Mammary epithelial cell (primary cell): ENCODE measurements at regions of chr3 and their contacts with region 1.

Region 1: GRCh38 chr3:16060358-16060852 is 114.1 kb upstream of the GALNT15 start:
- DNase-seq: peak; percentile 97
- H3K4me3 ChIP-seq: no peak overlapping the region
- H3K27ac ChIP-seq: peak overlapping the region; percentile 77
- H3K4me1 ChIP-seq: peaks cover 34% of the 10 kb centered on the region
- H3K27me3 ChIP-seq: no peaks in the 10 kb centered on the region
- CTCF ChIP-seq: peak; percentile 10 to 39

Region 2: DNA sequence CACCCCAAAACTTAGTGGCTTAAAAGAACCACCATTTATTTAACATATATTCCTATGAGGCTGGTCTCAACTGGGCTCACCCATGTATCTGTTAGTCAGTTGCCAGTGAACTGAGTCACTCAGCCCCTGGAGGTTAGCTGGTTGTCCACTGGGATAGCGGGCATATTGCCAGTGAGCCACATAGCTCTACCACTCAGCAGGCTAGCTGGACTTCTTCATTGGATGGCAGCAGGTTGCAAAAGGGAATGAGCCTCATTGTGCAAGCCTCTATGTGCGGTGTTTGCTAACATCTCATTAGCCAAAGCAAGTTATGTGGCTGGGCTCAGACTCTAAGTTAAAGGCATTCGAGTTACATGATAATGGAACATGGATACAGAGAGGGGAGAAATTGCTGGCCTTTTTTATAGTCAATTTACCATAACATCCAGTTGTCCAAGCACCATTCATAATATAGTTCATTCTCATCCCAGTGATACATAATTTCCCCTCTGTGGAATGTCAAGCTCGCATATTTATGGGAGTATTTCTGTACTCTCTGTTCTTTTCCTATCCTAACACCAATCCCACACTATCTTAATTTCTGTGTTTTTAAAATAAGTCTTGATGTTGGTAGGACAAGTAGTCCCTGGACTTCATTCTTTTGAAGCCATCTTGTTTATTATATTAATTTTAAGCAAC is 450.2 kb before region 1 on chr3:
- CTCF ChIA-PET with region 1: no interaction called
- dilution Hi-C with region 1: no loop called
- in situ Hi-C with region 1: no loop called
- intact Hi-C with region 1: no loop called
- DNase-seq: peak; percentile 83
- H3K4me3 ChIP-seq: no peak overlapping the region
- H3K27ac ChIP-seq: no peak overlapping the region
- H3K4me1 ChIP-seq: no peaks in the 10 kb centered on the region
- H3K27me3 ChIP-seq: no peaks in the 10 kb centered on the region
- CTCF ChIP-seq: no peak

Region 3: GRCh38 chr3:16026753-16027152 is 33.7 kb before region 1 on chr3:
- CTCF ChIA-PET with region 1: no interaction called
- dilution Hi-C with region 1: no loop called
- in situ Hi-C with region 1: no loop called
- intact Hi-C with region 1: no loop called
- DNase-seq: no peak
- H3K4me3 ChIP-seq: no peak overlapping the region
- H3K27ac ChIP-seq: no peak overlapping the region
- H3K4me1 ChIP-seq: no peaks in the 10 kb centered on the region
- H3K27me3 ChIP-seq: no peaks in the 10 kb centered on the region
- CTCF ChIP-seq: no peak

Region 4: GRCh38 chr3:16102905-16103364 is 42.5 kb after region 1 on chr3:
- CTCF ChIA-PET with region 1: no interaction called
- dilution Hi-C with region 1: no loop called
- in situ Hi-C with region 1: loop called in 1 of 2 experiments (anchors 5 kb)
- intact Hi-C with region 1: loop called (anchors 1 kb)
- DNase-seq: peak; percentile 63
- H3K4me3 ChIP-seq: no peak overlapping the region
- H3K27ac ChIP-seq: no peak overlapping the region
- H3K4me1 ChIP-seq: peaks cover 22% of the 10 kb centered on the region
- H3K27me3 ChIP-seq: no peaks in the 10 kb centered on the region
- CTCF ChIP-seq: no peak

Region 5: DNA sequence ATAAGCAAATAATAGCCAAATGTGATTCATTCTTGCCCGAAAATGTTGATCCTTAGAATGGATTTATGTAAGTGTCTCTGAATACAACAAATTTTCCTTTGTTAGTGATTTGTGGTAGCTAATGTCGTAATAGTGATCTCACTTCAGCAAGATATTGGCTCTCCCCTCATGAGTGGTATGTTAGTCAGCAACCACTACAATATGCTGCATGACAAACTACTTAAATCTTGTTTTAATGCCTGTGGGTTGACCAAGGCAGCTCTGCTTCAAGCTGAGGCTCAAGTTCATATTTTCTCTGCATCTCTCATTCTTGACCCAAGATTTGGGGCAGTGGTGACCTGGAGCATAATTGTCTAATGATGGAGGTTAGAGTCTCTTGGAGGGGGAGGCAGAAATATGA is 64.2 kb after region 1 on chr3:
- CTCF ChIA-PET with region 1: interaction called, 5 read pairs
- dilution Hi-C with region 1: no loop called
- in situ Hi-C with region 1: no loop called
- intact Hi-C with region 1: loop called (anchors 1 kb)
- DNase-seq: peak; percentile 94
- H3K4me3 ChIP-seq: no peak overlapping the region
- H3K27ac ChIP-seq: peak overlapping the region; percentile 18
- H3K4me1 ChIP-seq: peaks cover 26% of the 10 kb centered on the region
- H3K27me3 ChIP-seq: no peaks in the 10 kb centered on the region
- CTCF ChIP-seq: no peak

Region 6: GRCh38 chr3:16140894-16141285 is 80.5 kb after region 1 on chr3:
- CTCF ChIA-PET with region 1: interaction called, 3 read pairs
- dilution Hi-C with region 1: no loop called
- in situ Hi-C with region 1: no loop called
- intact Hi-C with region 1: loop called (anchors 1 kb)
- DNase-seq: no peak
- H3K4me3 ChIP-seq: no peak overlapping the region
- H3K27ac ChIP-seq: no peak overlapping the region
- H3K4me1 ChIP-seq: peaks cover 11% of the 10 kb centered on the region
- H3K27me3 ChIP-seq: no peaks in the 10 kb centered on the region
- CTCF ChIP-seq: no peak

Region 7: GRCh38 chr3:16177962-16178627 is 117.7 kb after region 1 on chr3:
- CTCF ChIA-PET with region 1: no interaction called
- dilution Hi-C with region 1: no loop called
- in situ Hi-C with region 1: no loop called
- intact Hi-C with region 1: loop called (anchors 1 kb)
- DNase-seq: peak; percentile 62
- H3K4me3 ChIP-seq: no peak overlapping the region
- H3K27ac ChIP-seq: no peak overlapping the region
- H3K4me1 ChIP-seq: peaks cover 5% of the 10 kb centered on the region
- H3K27me3 ChIP-seq: peaks cover 4% of the 10 kb centered on the region
- CTCF ChIP-seq: peak; percentile 93 to 99